K562 (cell line): ENCODE measurements at regions of chrX and their contacts with region 1.

Region 1: DNA sequence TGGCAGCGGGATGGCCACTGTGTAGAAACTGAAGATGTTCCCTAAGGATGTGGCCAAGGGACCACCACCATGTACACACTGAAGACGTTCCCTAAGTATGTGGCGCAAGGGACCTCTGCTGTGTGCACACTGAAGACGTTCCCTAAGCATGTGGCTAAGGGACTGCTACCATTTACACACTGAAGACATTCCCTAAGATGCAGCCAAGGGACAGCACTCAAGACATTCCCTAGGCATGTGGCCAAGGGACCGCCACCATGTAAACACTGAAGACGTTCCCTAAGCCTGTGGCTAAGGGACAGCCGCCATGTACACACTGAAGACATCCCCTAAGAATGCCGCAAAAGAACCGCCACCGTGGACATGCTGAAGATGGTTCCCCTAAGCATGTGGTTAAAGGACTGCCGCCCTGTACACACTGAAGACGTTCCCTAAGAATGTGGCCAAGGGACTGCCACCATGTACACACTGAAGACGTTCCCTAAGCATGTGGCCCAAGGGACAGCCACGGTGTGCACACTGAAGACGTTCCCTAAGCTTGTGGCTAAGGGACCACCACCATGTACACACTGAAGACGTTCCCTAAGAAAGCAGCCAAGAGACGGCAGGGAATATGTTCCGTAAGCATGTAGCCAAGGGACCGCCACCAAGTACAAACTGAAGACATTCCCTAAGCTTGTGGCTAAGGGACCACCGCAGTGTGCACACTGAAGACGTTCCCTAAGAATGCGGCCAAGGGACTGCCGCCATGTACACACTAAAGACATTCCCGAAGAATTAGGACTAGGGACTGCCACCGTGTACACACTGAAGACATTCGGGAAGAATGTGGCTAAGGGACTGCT is 43.3 kb downstream of the DHRSX start:
- DNase-seq: peak; percentile 39 to 95 (median 50)
- ATAC-seq: peak; percentile 86
- H3K4me3 ChIP-seq: peak overlapping the region; percentile 44
- H3K27ac ChIP-seq: peak overlapping the region; percentile 95
- H3K4me1 ChIP-seq: no peaks in the 10 kb centered on the region; a peak in 2 of 5 replicates
- H3K27me3 ChIP-seq: no peaks in the 10 kb centered on the region
- CTCF ChIP-seq: no peak
- EP300 ChIP-seq: 0 out of 2 replicates have a peak, but pooled peaks have one; percentile 8
- POLR2A ChIP-seq: no peak
- RAD21 ChIP-seq: peak in 1 of 2 experiments; percentile 47; a peak in 2 of 4 replicates

Region 2: GRCh38 chrX:1673337-1673736 is 784.2 kb before region 1 on chrX:
- CTCF ChIA-PET with region 1: no interaction called
- POLR2A ChIA-PET with region 1: no interaction called
- in situ Hi-C with region 1: loop called (anchors 10 kb)
- intact Hi-C with region 1: loop called (anchors 1 kb)
- DNase-seq: peak; percentile 19 to 49 (median 45)
- ATAC-seq: peak; percentile 62; the same call in 2 of the 3 replicates
- H3K4me3 ChIP-seq: no peak overlapping the region
- H3K27ac ChIP-seq: no peak overlapping the region
- H3K4me1 ChIP-seq: no peaks in the 10 kb centered on the region
- H3K27me3 ChIP-seq: peaks cover 0 to 4% of the 10 kb centered on the region in 2 experiments; a peak in 1 of 5 replicates
- CTCF ChIP-seq: peak; percentile 49 to 76 (median 68)
- EP300 ChIP-seq: no peak
- POLR2A ChIP-seq: no peak
- RAD21 ChIP-seq: peak in 1 of 2 experiments; percentile 62; a peak in 3 of 4 replicates